WTC11 (cell line): ENCODE measurements at regions of chr1 and their contacts with region 1.

Region 1: DNA sequence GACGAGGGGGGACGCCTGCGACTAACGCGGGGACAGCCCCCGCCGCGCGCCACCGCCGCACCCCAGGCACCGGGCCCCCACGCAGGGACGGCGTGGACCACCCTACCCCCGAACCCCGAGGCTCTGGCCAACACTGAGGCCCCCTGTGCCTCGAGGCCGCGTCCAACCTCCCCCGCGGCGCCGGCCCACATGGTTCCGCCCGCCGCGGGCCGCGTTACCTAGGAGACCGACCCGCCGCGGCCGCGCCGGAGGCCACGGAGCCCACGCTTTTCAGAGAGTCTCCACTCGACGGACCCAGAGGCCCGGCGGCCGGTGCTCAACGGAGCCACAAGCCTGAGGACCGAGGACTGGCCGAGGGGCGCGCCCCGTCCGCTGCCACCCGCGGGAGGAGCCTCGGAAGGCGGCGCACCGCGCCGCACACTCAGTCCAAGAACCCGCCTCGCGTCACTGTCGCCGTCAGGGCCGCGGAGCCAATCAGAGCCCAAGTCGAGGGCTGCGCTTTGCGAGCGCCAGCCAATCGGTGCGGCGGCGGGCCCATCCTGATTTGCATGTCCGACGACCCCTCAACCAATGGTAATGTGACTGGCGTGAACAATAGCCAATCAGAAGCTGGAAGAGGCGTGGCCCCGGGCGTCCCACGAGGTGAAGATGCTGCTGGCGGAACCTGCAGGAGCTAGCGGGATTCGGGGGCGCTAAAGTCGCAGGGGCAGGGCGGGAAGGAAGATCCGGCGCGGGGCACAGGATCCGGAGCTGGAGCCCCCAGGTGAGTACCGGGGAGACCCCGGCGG is at the start of gene NPHP4:
- DNase-seq: peak; percentile 100
- ATAC-seq: peak; percentile 91
- H3K4me3 Mint-ChIP-seq: peak within 1 kb of the TSS; percentile 90
- H3K27ac Mint-ChIP-seq: no peak within 1 kb of the TSS; the same call in 1 of the 2 replicates
- H3K4me1 Mint-ChIP-seq: peaks cover 22% of the 10 kb centered on the region
- H3K27me3 Mint-ChIP-seq: peaks cover 35% of the 10 kb centered on the region
- CTCF ChIP-seq: no peak
- total RNA-seq, gene NPHP4: 10.6 to 16.8 TPM (median 12.0 TPM) in 3 replicates

Region 2: DNA sequence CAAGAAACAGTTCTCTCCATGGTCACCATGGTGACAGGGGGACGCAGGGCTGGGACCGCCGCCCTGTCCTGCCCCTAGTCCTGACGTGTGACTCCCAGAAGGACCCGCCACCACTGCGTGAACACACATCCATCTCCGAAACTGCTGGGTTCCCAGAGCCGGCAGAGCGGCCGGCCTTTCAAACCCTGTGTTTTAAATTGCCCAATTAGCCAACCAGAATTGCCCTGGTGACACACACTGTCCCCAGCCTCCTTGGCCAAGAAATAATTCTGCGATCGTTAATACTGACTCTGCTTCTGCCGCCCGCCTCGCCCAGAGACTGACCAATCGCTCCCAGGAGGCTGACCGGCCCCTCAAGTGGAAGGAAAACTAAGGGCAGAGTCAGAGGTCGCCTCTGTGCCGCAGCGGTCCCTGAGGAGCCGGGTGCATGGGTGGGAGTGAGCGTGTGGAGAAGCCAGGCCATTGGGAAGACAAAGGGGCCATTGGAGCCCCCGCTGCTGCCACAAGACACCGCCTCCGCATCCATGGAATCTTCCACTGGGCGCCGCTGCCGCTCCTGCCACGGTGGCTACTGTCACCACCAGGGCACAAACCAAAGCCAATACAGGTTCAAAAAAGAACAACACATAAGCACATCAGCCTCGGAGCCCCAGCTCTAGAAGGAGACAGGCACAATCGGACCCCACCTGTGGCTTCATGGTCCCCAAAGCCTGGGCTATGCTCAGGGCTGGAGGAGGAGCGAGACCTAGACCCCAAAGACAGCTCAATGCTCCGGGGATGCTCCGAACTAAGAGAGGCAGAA is 273.2 kb before region 1 on chr1:
- CTCF ChIA-PET with region 1: no interaction called
- POLR2A ChIA-PET with region 1: no interaction called
- DNase-seq: peak; percentile 37
- ATAC-seq: peak; percentile 47
- H3K4me3 Mint-ChIP-seq: no peak overlapping the region
- H3K27ac Mint-ChIP-seq: no peak overlapping the region; the same call in 1 of the 2 replicates
- H3K4me1 Mint-ChIP-seq: peaks cover 30% of the 10 kb centered on the region
- H3K27me3 Mint-ChIP-seq: peaks cover 3% of the 10 kb centered on the region; the same call in 1 of the 2 replicates
- CTCF ChIP-seq: no peak

Region 3: GRCh38 chr1:5876104-5876650 is 116.0 kb before region 1 on chr1:
- CTCF ChIA-PET with region 1: no interaction called
- POLR2A ChIA-PET with region 1: no interaction called
- DNase-seq: no peak
- ATAC-seq: no peak
- H3K4me3 Mint-ChIP-seq: no peak overlapping the region
- H3K27ac Mint-ChIP-seq: no peak overlapping the region
- H3K4me1 Mint-ChIP-seq: no peaks in the 10 kb centered on the region
- H3K27me3 Mint-ChIP-seq: no peaks in the 10 kb centered on the region
- CTCF ChIP-seq: no peak

Region 4: GRCh38 chr1:5980314-5981008 is 11.8 kb before region 1 on chr1:
- CTCF ChIA-PET with region 1: interaction called, 39 read pairs
- POLR2A ChIA-PET with region 1: interaction called, 9 read pairs
- DNase-seq: peak; percentile 88
- ATAC-seq: peak; percentile 98
- H3K4me3 Mint-ChIP-seq: peak overlapping the region; percentile 57
- H3K27ac Mint-ChIP-seq: peak overlapping the region; percentile 69
- H3K4me1 Mint-ChIP-seq: peaks cover 15% of the 10 kb centered on the region
- H3K27me3 Mint-ChIP-seq: no peaks in the 10 kb centered on the region
- CTCF ChIP-seq: no peak